Sigmoid colon (tissue), 7 donors: ENCODE measurements at regions of chr15 and their contacts with region 1.

Region 1: GRCh38 chr15:85380217-85380811 is at the start of gene AKAP13:
- DNase-seq: peak; percentile 99
- H3K4me3 ChIP-seq: peak within 1 kb of the TSS; percentile 65 to 97 (median 92)
- H3K27ac ChIP-seq: peak within 1 kb of the TSS; percentile 93 to 98 (median 97)
- H3K4me1 ChIP-seq: peaks cover 0 to 35% (median 22%) of the 10 kb centered on the region in 4 donors
- H3K27me3 ChIP-seq: no peaks in the 10 kb centered on the region
- CTCF ChIP-seq: no peak
- EP300 ChIP-seq: no peak
- POLR2A ChIP-seq: peak; percentile 91 to 92
- total RNA-seq, gene AKAP13: 98.5 to 142 (median 126) TPM

Region 2: GRCh38 chr15:85485956-85486567 is 105.7 kb after region 1 on chr15:
- intact Hi-C with region 1: loop called (anchors 5 kb)
- DNase-seq: no peak
- H3K4me3 ChIP-seq: no peak overlapping the region
- H3K27ac ChIP-seq: peak overlapping the region in 1 of 4 donors; percentile 62
- H3K4me1 ChIP-seq: peaks cover 0 to 63% (median 32%) of the 10 kb centered on the region in 4 donors
- H3K27me3 ChIP-seq: no peaks in the 10 kb centered on the region
- CTCF ChIP-seq: peak; percentile 44 to 63 (median 56)
- EP300 ChIP-seq: no peak
- POLR2A ChIP-seq: no peak

Region 3: DNA sequence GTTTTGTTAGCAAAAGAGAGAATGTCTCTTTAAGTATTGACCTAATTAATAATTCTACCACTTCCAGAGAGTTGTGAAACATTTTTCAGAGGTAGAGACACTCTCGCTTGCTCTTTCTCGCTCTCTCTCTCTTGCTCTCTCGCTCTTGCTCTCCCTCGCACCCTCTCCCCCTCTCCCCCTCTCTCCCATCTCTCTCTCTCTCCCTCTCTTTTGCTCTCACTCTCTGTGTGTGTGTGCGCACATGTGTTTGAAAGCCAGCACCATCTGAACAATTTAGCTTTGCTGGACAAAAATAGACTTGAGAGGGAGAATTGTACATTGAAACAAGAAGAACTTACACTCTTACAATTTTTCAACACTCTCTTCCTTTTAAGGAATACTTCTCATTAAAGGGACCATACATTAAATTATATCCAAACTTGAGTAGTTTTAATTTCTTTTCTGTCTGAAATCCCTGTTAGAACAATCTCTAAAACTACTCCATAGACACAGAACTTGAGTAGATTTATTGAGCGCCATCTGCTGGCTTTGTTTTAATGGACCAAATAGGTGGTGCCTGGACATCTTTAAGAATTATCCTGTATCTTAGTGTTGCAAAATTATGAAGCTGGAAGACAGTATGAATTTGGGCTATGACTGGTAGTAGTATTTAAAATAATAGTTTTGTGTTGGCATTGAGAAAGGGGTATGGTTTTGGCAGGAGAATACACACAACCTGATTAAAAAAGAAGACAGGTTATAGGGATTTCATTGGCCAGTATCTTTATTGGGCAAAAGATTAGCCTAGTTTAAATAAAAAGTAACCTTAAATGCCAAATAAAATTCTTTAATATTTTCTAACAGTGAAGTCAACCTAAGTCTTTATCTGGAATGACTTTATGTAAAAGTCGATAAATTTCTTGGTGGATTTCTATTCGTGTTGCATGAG is 124.7 kb after region 1 on chr15:
- intact Hi-C with region 1: loop called (anchors 5 kb)
- DNase-seq: no peak
- H3K4me3 ChIP-seq: no peak overlapping the region
- H3K27ac ChIP-seq: peak overlapping the region; percentile 10 to 68 (median 64)
- H3K4me1 ChIP-seq: peaks cover 0 to 14% (median 8%) of the 10 kb centered on the region in 4 donors
- H3K27me3 ChIP-seq: no peaks in the 10 kb centered on the region
- CTCF ChIP-seq: peak; percentile 35 to 56 (median 48)
- EP300 ChIP-seq: no peak
- POLR2A ChIP-seq: no peak

Region 4: DNA sequence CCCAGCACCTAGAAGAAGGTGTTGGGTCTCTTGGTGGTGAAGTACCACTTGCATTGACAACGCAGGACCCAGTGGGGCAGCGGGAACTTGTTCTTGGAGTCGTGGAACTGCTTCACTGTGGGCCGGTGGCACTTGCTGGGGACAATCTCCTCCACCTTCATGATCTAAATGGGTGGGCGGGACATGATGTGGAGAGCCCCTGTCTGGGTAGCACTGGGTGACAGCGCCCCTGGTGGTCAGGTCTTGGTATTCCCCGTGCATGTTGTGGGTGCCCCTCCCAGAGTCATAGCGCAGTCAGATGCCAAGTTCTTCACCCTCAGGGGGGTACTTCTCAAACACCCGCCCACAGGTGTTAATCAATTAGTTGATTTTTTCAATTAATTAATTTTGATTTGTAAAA is 759.5 kb after region 1 on chr15:
- intact Hi-C with region 1: no loop called
- DNase-seq: no peak
- H3K4me3 ChIP-seq: no peak overlapping the region
- H3K27ac ChIP-seq: no peak overlapping the region
- H3K4me1 ChIP-seq: no peaks in the 10 kb centered on the region
- H3K27me3 ChIP-seq: no peaks in the 10 kb centered on the region
- CTCF ChIP-seq: no peak
- EP300 ChIP-seq: no peak
- POLR2A ChIP-seq: no peak